ENCODE measurements at regions of chr1 and their contacts with region 1.

Region 1: GRCh38 chr1:220914283-220915116 is 35.3 kb downstream of the HLX start:
- DNase-seq: no peak
- ATAC-seq: peak in 3 of 4 donors; percentile 34 to 38 (median 37)
- H3K4me3 ChIP-seq: no peak overlapping the region
- H3K27ac ChIP-seq: no peak overlapping the region
- H3K4me1 ChIP-seq: peaks cover 0 to 25% (median 0%) of the 10 kb centered on the region in 12 donors
- H3K27me3 ChIP-seq: peaks cover 0 to 4% (median 0%) of the 10 kb centered on the region in 9 donors
- CTCF ChIP-seq: no peak
- POLR2A ChIP-seq: no peak

Region 2: DNA sequence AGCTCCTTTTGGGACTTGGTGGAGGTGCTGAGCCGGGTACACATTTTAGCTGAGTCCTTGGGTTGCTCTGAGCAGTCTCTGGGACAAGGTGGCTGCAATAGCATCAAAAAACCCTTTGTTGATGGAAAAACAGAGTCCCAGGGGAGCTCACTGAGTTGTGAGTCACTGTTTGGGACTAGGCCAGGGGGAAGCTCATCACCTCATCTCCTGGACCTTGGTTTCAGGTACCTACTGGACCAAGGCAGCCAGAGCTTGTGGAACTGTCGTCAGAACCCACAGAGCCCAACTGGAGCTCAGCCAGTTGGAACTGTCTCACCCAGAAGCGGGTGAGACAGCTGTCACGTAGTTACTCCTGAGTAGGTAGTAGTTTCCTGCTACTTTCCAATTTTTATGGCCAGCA is 111.5 kb after region 1 on chr1:
- intact Hi-C with region 1: loop called in 1 of 10 experiments (anchors 10 kb)
- DNase-seq: no peak
- ATAC-seq: peak in 2 of 4 donors; percentile 33 to 62
- H3K4me3 ChIP-seq: no peak overlapping the region
- H3K27ac ChIP-seq: no peak overlapping the region
- H3K4me1 ChIP-seq: peaks cover 0 to 33% (median 5%) of the 10 kb centered on the region in 12 donors
- H3K27me3 ChIP-seq: no peaks in the 10 kb centered on the region
- CTCF ChIP-seq: no peak
- POLR2A ChIP-seq: no peak

Region 3: DNA sequence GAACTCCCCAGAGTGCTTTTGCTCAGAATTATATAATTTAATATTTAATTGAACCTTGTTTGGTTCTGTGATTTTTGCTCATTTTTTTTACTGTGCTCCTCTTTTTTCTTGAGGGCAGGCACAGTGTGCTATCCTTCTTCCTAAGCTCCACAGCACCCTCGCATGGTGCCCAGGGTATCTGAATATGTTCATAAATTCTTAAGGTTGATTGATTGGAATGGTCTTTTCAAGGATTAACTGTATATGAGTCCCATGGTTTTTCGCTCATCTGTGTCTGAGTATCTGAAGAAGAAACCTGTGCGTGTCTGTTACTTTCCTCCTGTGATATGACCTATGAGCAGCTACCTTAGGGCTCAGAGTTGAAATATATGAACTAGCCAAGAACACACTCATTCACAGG is 358.4 kb after region 1 on chr1:
- intact Hi-C with region 1: loop called in 4 of 10 experiments (anchors 10 kb)
- DNase-seq: no peak
- ATAC-seq: no peak
- H3K4me3 ChIP-seq: no peak overlapping the region
- H3K27ac ChIP-seq: no peak overlapping the region
- H3K4me1 ChIP-seq: no peaks in the 10 kb centered on the region
- H3K27me3 ChIP-seq: no peaks in the 10 kb centered on the region
- CTCF ChIP-seq: peak in 7 of 12 donors; percentile 18 to 41 (median 34)
- POLR2A ChIP-seq: no peak

Measured in heart left ventricle (tissue), 16 donors.